ENCODE measurements at regions of chr14 and their contacts with region 1.

Region 1: DNA sequence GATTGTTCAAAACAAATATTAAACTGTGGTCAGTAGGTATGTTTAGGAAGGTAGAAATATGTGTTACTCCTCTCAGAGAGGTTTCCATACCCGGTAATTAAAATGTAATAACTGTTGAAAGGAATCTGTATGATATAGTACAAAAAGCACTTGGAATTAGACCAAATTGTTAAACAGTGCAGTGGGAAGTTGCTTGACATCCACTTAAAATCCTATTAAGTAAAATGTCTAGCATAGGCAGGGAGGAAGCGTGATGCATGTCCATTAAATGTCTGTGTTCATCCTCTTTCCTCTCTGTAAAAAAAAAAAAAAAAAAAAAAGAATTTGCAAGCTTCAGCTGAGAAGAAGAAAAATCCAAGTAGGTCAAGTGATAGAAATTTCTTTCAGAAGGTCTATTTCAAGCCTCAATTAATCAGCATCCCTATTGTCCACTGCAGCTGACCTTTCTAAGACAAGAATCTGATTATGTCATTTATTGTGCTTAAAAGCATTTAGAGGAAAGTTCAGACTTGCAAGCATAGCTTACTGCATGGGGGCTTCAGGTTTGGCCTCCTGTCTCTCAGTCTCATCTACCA is 265.6 kb upstream of the RGS6 start:
- DNase-seq: no peak
- ATAC-seq: no peak
- H3K4me3 ChIP-seq: no peak overlapping the region
- H3K4me3 Mint-ChIP-seq: no peak overlapping the region
- H3K27ac ChIP-seq: no peak overlapping the region
- H3K27ac Mint-ChIP-seq: no peak overlapping the region
- H3K4me1 ChIP-seq: peaks cover 0 to 10% of the 10 kb centered on the region in 2 experiments
- H3K4me1 Mint-ChIP-seq: peaks cover 0 to 8% (median 4%) of the 10 kb centered on the region in 3 donors
- H3K27me3 ChIP-seq: no peaks in the 10 kb centered on the region
- H3K27me3 Mint-ChIP-seq: no peaks in the 10 kb centered on the region

Region 2: GRCh38 chr14:70714055-70714621 is 952.5 kb before region 1 on chr14:
- CTCF ChIA-PET with region 1: interaction called in 1 of 2 experiments, 14 read pairs
- POLR2A ChIA-PET with region 1: no interaction called
- DNase-seq: peak in 28 of 35 experiments; percentile 8 to 85 (median 28)
- ATAC-seq: no peak
- H3K4me3 ChIP-seq: no peak overlapping the region
- H3K4me3 Mint-ChIP-seq: no peak overlapping the region
- H3K27ac ChIP-seq: no peak overlapping the region
- H3K27ac Mint-ChIP-seq: no peak overlapping the region
- H3K4me1 ChIP-seq: peaks cover 0 to 3% of the 10 kb centered on the region in 2 experiments
- H3K4me1 Mint-ChIP-seq: peaks cover 2 to 7% (median 3%) of the 10 kb centered on the region in 3 donors
- H3K27me3 ChIP-seq: peaks cover 0 to 4% of the 10 kb centered on the region in 2 experiments
- H3K27me3 Mint-ChIP-seq: peaks cover 3 to 5% of the 10 kb centered on the region in 2 donors

Region 3: GRCh38 chr14:71733210-71733883 is 66.7 kb after region 1 on chr14:
- CTCF ChIA-PET with region 1: no interaction called
- POLR2A ChIA-PET with region 1: no interaction called
- DNase-seq: no peak
- ATAC-seq: no peak
- H3K4me3 ChIP-seq: no peak overlapping the region
- H3K4me3 Mint-ChIP-seq: no peak overlapping the region
- H3K27ac ChIP-seq: no peak overlapping the region
- H3K27ac Mint-ChIP-seq: no peak overlapping the region
- H3K4me1 ChIP-seq: no peaks in the 10 kb centered on the region
- H3K4me1 Mint-ChIP-seq: no peaks in the 10 kb centered on the region
- H3K27me3 ChIP-seq: no peaks in the 10 kb centered on the region
- H3K27me3 Mint-ChIP-seq: no peaks in the 10 kb centered on the region

Measured in T-cell (primary cell).